ENCODE measurements at regions of chr4 and their contacts with region 1.

Region 1: DNA sequence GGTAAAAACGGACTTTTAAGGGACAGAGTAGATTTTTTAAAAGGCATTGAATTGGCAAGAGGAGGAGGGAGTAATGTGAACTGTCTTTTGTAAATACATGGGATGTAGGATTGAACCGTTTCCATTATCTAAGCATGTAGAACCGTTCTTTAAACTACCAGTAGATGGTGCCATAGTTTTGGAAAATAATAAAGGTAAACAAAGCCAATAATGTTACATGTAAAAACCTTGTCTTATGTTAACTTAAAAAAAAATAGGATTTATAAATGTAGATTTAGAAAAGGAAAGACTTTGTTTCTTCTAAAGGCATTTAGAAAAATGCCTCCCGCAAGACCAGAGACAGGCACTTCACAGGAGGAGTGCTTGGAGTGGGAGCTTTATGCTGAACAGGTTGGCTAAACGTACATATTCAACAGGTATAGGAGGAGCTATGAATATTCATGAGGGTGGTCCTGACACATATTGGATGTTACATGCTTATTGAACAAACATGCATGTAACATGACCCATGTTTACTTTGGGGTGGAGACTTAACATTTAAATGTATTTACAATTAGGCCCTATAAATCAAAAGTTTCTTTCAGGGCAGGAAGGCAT is 45.5 kb upstream of the FAM241A start:
- DNase-seq: no peak
- ATAC-seq: peak; percentile 80

Region 2: DNA sequence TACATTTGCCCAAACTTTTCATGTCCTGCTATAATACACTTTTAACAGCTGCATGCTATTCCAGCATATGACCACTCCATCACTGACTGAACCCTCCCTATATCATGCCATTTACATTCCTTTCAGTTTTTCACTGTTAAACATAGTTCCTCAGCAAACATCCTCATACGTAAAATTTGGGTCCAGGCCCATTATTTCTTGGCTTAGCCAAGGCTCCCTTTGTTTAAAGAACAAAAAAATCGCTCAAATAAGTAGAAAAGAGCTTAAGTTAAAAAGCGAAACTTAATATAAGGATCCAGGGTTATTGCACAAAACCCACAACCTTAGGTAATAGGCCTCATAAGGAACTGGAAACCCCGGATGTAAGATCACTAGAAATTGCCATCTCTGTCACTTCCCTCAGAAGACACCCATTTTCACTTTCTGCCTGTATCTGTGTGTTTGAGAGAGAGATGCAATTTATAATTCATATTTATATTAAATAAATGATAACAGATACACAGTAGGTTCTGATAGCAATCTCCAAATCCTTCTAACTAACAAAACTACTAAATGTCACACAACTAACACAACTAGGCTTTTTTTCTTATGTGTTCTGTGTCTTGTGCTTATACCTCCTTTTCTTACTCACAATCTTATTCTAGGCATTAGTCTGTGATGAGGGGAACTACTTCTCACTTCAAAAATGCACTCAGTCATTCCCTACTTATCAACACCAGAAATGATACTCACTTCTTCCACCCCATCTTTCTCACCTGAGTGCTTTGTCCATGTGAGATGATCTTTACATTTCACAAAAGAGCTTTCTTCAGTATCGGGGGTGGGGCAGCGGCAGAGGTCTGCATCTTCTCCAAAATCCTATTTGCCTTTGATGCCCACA is 14.4 kb before region 1 on chr4:
- intact Hi-C with region 1: no loop called
- DNase-seq: no peak
- ATAC-seq: no peak

Region 3: GRCh38 chr4:112231779-112232713 is 132.2 kb after region 1 on chr4 and contains the start of gene AP1AR:
- intact Hi-C with region 1: loop called (anchors 10 kb)
- DNase-seq: peak; percentile 89
- ATAC-seq: peak; percentile 80
- total RNA-seq, gene AP1AR: 17.4 TPM

Measured in sciatic nerve (tissue), 2 donors.